Activated CD4-positive, alpha-beta T cell treated with anti-CD3 and anti-CD28 coated beads for 36 hours (primary cell): ENCODE measurements at regions of chr19 and their contacts with region 1.

Region 1: GRCh38 chr19:29714953-29715700 is at the start of gene C19orf12:
- DNase-seq: peak; percentile 82
- ATAC-seq: peak; percentile 56
- H3K4me3 Mint-ChIP-seq: peak within 1 kb of the TSS; percentile 92
- H3K27ac Mint-ChIP-seq: peak within 1 kb of the TSS; percentile 99
- H3K4me1 Mint-ChIP-seq: peaks cover 52% of the 10 kb centered on the region
- H3K27me3 Mint-ChIP-seq: no peaks in the 10 kb centered on the region
- total RNA-seq, gene C19orf12: 26.7 to 35.7 TPM

Region 2: DNA sequence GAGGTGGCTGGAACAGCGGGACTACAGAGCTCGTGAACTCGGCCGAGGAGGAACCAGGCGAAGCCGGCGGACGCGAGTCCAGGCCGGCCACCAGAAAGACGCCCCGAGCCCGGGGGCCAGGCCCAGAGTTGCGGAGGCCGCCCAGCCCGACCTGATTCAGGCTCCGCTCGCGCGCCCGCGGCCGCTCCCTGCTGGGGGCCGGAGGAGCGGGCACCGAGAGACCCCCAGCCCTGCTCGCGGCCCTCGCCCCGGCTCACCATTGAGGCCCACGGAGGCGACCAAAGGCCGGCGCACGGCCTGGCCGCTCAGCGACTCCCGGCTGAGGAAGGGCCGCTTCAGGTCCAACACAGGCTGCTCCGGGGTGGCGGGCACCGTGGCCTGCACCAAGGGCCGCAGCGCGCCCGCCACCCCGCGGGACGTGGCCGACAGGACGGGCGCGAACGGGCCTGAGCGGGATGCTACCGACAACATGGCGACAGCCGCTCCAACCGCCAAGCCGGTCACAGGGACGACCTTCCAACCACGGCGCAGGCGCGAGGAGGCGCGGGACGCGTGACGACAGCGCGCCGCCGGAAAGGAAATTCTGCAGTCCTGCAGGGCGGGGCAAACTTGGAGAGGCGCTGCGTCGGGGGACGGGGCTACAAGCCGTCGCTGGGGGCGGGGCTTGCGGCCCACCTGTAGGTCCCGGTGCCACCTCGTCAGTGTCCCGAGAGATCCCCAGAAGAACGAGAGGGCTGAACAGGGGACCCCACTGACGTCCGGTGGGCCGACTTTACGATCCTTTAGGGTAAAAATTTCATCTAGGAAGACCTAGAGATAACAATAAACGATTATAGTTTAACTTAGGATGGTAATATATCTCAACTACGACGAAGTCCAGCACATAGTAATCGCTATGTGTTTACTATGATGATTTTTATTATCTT is 502.2 kb before region 1 on chr19 and contains the start of gene UQCRFS1:
- CTCF ChIA-PET with region 1: no interaction called
- POLR2A ChIA-PET with region 1: interaction called, 4 read pairs
- intact Hi-C with region 1: loop called in 1 of 2 experiments (anchors 2 kb)
- DNase-seq: peak; percentile 98
- ATAC-seq: peak; percentile 98
- H3K4me3 Mint-ChIP-seq: peak within 1 kb of the TSS; percentile 95
- H3K27ac Mint-ChIP-seq: peak within 1 kb of the TSS; percentile 95
- H3K4me1 Mint-ChIP-seq: peaks cover 48% of the 10 kb centered on the region
- H3K27me3 Mint-ChIP-seq: peaks cover 3% of the 10 kb centered on the region
- total RNA-seq, gene UQCRFS1: 39.1 to 45.3 TPM

Region 3: DNA sequence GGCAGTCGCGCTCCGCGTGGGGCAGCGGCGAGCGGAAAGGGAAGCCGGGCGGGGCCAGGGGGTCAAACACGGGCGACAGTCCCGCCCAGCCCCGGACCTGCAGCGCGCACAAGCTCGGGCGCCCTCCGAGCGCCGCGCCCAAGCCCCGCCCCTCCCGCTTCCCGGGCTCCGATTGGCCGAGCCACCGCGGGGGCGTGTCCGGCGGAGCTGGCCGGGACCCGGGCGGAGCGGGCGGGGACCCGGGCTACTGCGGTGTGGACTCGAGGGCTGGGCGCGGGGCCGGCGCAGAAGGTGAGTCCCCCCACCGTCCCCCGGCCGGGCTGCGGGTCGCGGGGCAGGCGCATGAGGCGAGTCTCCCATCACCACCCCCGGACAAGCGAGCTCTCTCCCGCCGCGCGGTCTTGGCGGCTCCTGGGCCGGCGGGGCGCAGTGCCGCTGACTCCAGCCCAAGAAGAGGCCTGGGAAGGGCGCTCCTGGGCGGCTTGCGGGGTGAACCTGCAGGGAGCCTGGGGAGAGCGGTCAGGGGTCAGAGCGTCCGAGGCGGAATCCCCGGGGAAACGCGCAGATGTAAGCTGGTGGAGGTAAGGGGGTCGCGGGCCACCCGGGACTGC is 49.8 kb before region 1 on chr19 and contains the start of gene PLEKHF1:
- CTCF ChIA-PET with region 1: interaction called, 55 read pairs
- POLR2A ChIA-PET with region 1: interaction called, 4 read pairs
- intact Hi-C with region 1: loop called (anchors 1 kb)
- DNase-seq: peak; percentile 92
- ATAC-seq: peak; percentile 76
- H3K4me3 Mint-ChIP-seq: peak within 1 kb of the TSS; percentile 87
- H3K27ac Mint-ChIP-seq: peak within 1 kb of the TSS; percentile 96
- H3K4me1 Mint-ChIP-seq: peaks cover 71% of the 10 kb centered on the region
- H3K27me3 Mint-ChIP-seq: no peaks in the 10 kb centered on the region
- total RNA-seq, gene PLEKHF1: 25.4 to 26.6 TPM

Region 4: GRCh38 chr19:29694669-29695627 is 20.2 kb before region 1 on chr19:
- CTCF ChIA-PET with region 1: interaction called, 97 read pairs
- POLR2A ChIA-PET with region 1: no interaction called
- intact Hi-C with region 1: loop called (anchors 1 kb)
- DNase-seq: peak; percentile 92
- ATAC-seq: peak; percentile 97
- H3K4me3 Mint-ChIP-seq: no peak overlapping the region
- H3K27ac Mint-ChIP-seq: peak overlapping the region; percentile 53
- H3K4me1 Mint-ChIP-seq: peaks cover 12% of the 10 kb centered on the region
- H3K27me3 Mint-ChIP-seq: no peaks in the 10 kb centered on the region

Region 5: DNA sequence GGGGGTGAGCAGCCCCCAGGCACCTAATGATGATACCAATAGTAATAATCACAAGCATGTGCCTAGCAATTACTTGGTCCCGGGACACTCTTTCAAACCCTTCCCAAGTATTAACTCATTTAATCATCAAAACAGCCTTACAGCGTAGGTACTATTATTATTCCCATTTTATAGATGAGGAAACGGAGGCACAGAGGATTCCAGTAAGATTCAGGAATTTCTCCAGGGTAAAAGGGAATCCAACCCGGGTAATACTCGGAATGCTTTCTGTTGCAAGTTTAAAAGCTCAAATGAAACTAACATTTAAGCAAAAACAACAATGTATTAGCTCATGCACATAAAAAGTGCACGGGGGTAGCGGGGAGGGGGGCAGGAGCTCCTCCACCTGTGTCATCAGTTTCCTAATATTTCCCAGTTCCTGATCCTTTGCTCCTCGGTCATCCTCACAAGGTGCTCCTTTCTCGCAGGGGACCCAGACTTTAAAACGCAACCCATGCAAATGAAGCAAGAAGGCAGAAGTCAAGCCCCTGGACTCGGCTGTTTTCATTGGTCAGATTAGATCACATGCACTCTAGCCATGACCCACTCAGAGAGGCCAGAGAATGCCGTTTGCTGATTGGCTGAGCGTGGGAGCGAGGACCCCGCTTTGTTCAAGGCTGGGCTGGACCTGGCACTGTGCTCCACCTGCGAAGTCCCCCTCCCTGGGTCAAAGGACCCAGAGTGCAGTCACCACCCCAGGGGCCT is 38.2 kb after region 1 on chr19:
- CTCF ChIA-PET with region 1: no interaction called
- POLR2A ChIA-PET with region 1: no interaction called
- intact Hi-C with region 1: no loop called
- DNase-seq: no peak
- ATAC-seq: no peak
- H3K4me3 Mint-ChIP-seq: no peak overlapping the region
- H3K27ac Mint-ChIP-seq: no peak overlapping the region
- H3K4me1 Mint-ChIP-seq: no peaks in the 10 kb centered on the region
- H3K27me3 Mint-ChIP-seq: peaks cover 2% of the 10 kb centered on the region

Region 6: DNA sequence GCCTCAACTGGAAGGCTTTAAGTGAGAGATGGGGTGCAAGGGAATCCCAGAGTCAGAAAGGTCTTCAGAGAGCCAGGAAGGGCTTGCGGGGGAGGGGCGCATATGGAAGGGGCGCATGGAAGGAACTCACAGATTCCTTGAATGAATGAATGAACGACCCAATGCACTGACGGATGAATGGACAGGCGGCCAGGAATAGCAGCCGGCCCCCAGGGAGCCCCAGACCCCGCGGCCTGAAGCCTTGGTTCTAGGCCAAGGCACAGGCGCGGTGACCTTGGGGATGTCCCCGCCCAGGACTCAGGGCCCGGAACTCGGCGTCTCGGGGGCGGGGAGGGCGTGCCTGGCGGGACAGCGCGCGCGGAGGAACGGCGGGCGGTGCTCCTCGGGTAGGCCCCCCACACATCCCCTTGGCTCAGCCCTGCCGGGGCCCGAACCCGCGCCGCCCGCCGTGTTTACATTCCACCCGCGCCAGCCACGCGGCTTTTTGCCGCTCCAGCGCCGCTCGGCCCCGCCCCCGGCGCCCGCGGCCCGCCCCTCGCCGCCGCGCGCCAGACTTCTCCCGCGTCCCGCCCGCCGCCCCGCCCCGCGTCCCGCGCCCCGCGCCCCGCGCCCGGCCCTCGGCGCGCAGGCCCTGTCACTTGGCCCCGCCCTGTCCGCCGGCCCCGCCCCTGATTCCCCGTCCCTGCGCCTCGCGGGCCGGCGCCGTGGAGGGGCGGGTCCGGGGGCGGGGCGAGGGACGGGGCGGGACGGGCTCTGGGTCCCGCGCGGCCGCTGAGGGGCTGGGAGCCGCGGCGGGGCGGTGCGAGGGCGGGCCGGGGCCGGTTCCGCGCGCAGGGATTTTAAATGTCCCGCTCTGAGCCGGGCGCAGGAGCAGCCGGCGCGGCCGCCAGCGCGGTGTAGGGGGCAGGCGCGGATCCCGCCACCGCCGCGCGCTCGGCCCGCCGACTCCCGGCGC is 96.3 kb after region 1 on chr19 and contains the start of gene CCNE1:
- CTCF ChIA-PET with region 1: no interaction called
- POLR2A ChIA-PET with region 1: no interaction called
- intact Hi-C with region 1: loop called in 1 of 2 experiments (anchors 1 kb)
- DNase-seq: peak; percentile 98
- ATAC-seq: peak; percentile 93
- H3K4me3 Mint-ChIP-seq: peak within 1 kb of the TSS; percentile 88
- H3K27ac Mint-ChIP-seq: peak within 1 kb of the TSS; percentile 94
- H3K4me1 Mint-ChIP-seq: peaks cover 15% of the 10 kb centered on the region
- H3K27me3 Mint-ChIP-seq: no peaks in the 10 kb centered on the region
- total RNA-seq, gene CCNE1: 29.4 to 30.4 TPM

Region 7: GRCh38 chr19:29844891-29845572 is 129.9 kb after region 1 on chr19:
- CTCF ChIA-PET with region 1: interaction called, 5 read pairs
- POLR2A ChIA-PET with region 1: no interaction called
- intact Hi-C with region 1: loop called in 1 of 2 experiments (anchors 1 kb)
- DNase-seq: peak; percentile 99
- ATAC-seq: peak; percentile 83
- H3K4me3 Mint-ChIP-seq: peak overlapping the region; percentile 83
- H3K27ac Mint-ChIP-seq: peak overlapping the region; percentile 83
- H3K4me1 Mint-ChIP-seq: peaks cover 11% of the 10 kb centered on the region
- H3K27me3 Mint-ChIP-seq: no peaks in the 10 kb centered on the region

Region 8: GRCh38 chr19:30804333-30805103 is 1089.4 kb after region 1 on chr19:
- CTCF ChIA-PET with region 1: no interaction called
- POLR2A ChIA-PET with region 1: no interaction called
- intact Hi-C with region 1: no loop called
- DNase-seq: no peak
- ATAC-seq: no peak
- H3K4me3 Mint-ChIP-seq: no peak overlapping the region
- H3K27ac Mint-ChIP-seq: no peak overlapping the region
- H3K4me1 Mint-ChIP-seq: no peaks in the 10 kb centered on the region
- H3K27me3 Mint-ChIP-seq: peaks cover 12% of the 10 kb centered on the region